Aorta (tissue), 5 donors: ENCODE measurements at regions of chr9 and their contacts with region 1.

Region 1: GRCh38 chr9:77456829-77457437 is 191.2 kb downstream of the GNA14 start:
- DNase-seq: peak; percentile 87 to 92
- ATAC-seq: peak; percentile 91
- H3K4me3 ChIP-seq: no peak overlapping the region
- H3K27ac ChIP-seq: no peak overlapping the region
- H3K4me1 ChIP-seq: no peaks in the 10 kb centered on the region
- H3K27me3 ChIP-seq: no peaks in the 10 kb centered on the region

Region 2: DNA sequence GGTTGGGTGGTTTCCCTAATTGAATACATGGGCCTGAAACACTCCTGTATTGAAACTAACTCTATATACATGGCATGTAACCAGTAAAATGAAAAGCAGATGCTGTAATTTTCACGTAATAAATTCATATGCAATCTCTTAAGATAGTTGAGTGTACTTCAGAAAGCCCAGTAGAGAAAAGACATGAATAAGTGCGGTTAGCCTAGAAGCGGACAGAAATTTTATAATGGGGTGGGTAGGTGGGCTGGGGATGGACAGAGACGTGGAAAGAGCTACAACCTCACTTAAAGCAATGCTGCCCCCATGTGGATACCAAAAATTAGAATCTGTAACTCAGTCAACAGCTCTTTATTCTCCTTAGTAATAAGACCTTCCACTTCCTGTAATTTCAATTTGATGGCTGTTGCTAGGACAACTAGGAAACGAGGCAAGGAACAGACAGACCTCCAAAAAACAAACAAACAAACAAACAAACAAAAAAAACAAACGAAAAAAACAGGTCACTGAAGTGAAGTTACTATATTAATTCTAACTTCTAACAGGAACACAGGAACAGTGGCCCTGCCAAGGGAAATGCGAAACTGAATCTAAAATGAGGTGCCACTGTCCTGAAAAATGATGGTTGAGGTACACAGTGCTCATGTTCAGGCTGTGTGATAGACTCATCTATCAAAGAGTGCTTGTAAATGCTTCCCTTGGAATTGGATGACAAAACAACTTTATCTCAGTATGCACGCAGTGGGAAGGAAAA is 294.6 kb after region 1 on chr9:
- intact Hi-C with region 1: loop called (anchors 5 kb)
- DNase-seq: no peak
- ATAC-seq: peak; percentile 81
- H3K4me3 ChIP-seq: no peak overlapping the region
- H3K27ac ChIP-seq: peak overlapping the region in 1 of 2 donors; percentile 43
- H3K4me1 ChIP-seq: no peaks in the 10 kb centered on the region
- H3K27me3 ChIP-seq: no peaks in the 10 kb centered on the region